CD4-positive, alpha-beta memory T cell (primary cell): ENCODE measurements at regions of chr9 and their contacts with region 1.

Region 1: DNA sequence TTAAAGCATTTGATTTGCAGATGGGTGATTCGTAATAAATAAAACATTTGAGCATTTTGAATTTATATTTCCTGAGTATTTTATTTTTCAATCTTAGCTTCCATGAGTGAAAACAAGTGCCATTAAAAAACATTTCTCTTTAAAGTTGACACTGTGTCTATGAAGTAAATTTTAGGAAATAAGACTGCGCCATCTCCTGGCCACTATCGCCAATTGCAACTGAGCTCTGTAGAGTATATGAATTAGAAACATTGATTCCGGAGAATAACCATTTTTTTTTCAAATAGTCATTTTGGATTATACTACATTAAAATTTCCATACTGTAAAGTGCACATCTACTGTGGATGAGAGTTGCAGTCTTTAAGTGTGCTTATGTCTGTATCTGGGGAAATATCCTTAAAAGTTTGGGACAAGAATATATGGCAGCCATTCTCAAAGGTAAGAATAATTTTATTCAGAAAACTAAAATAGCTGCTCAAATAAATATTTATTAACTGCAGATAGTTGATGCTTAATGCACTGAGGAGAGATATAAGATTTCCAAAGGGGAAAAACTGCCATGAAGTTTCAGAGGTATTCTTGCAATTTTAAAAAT is 5.9 kb downstream of the DMRTA1 start:
- DNase-seq: peak; percentile 29 to 48 (median 35)
- H3K4me3 ChIP-seq: no peak overlapping the region
- H3K4me3 Mint-ChIP-seq: no peak overlapping the region
- H3K27ac ChIP-seq: no peak overlapping the region
- H3K27ac Mint-ChIP-seq: no peak overlapping the region
- H3K4me1 ChIP-seq: peaks cover 3% of the 10 kb centered on the region
- H3K4me1 Mint-ChIP-seq: peaks cover 0 to 7% (median 3%) of the 10 kb centered on the region in 4 donors
- H3K27me3 ChIP-seq: peaks cover 14% of the 10 kb centered on the region
- H3K27me3 Mint-ChIP-seq: peaks cover 23 to 31% of the 10 kb centered on the region in 2 donors

Region 2: DNA sequence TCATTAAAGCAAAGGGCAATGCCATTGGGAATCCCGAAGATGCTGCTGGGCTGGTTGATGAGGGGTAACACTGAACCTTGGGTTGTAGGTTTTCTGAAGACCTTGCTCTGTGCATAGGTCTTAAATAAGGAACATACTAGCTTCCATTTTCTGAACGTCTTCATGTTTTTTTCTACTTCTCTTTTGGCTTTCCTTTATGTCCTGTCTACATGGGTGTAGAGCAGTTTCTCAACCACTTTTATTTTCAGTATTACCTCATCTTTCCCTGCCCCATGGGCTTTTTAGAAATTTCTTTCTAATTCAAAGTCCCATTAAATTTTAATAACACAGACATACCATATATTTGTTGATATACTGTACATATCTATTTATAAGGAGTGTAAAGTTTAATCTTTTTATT is 1212.6 kb before region 1 on chr9 and contains the start of gene IFNA14:
- CTCF ChIA-PET with region 1: no interaction called
- POLR2A ChIA-PET with region 1: no interaction called
- intact Hi-C with region 1: loop called (anchors 5 kb)
- DNase-seq: no peak
- H3K4me3 ChIP-seq: no peak within 1 kb of the TSS
- H3K4me3 Mint-ChIP-seq: no peak within 1 kb of the TSS
- H3K27ac ChIP-seq: no peak within 1 kb of the TSS
- H3K27ac Mint-ChIP-seq: no peak within 1 kb of the TSS
- H3K4me1 ChIP-seq: peaks cover 5% of the 10 kb centered on the region
- H3K4me1 Mint-ChIP-seq: peaks cover 4 to 12% (median 7%) of the 10 kb centered on the region in 4 donors
- H3K27me3 ChIP-seq: no peaks in the 10 kb centered on the region
- H3K27me3 Mint-ChIP-seq: peaks cover 2 to 15% of the 10 kb centered on the region in 2 donors
- total RNA-seq, gene IFNA14: not detected

Region 3: GRCh38 chr9:22037954-22038690 is 414.4 kb before region 1 on chr9:
- CTCF ChIA-PET with region 1: no interaction called
- POLR2A ChIA-PET with region 1: no interaction called
- intact Hi-C with region 1: loop called (anchors 5 kb)
- DNase-seq: peak in 4 of 5 donors; percentile 22 to 39 (median 32)
- H3K4me3 ChIP-seq: no peak overlapping the region
- H3K4me3 Mint-ChIP-seq: no peak overlapping the region
- H3K27ac ChIP-seq: no peak overlapping the region
- H3K27ac Mint-ChIP-seq: no peak overlapping the region
- H3K4me1 ChIP-seq: peaks cover 11% of the 10 kb centered on the region
- H3K4me1 Mint-ChIP-seq: peaks cover 0 to 8% (median 4%) of the 10 kb centered on the region in 4 donors
- H3K27me3 ChIP-seq: no peaks in the 10 kb centered on the region
- H3K27me3 Mint-ChIP-seq: no peaks in the 10 kb centered on the region

Region 4: GRCh38 chr9:22244141-22245011 is 208.1 kb before region 1 on chr9:
- CTCF ChIA-PET with region 1: interaction called, 7 read pairs
- POLR2A ChIA-PET with region 1: no interaction called
- intact Hi-C with region 1: loop called (anchors 1 kb)
- DNase-seq: peak in 4 of 5 donors; percentile 16 to 30 (median 26)
- H3K4me3 ChIP-seq: no peak overlapping the region
- H3K4me3 Mint-ChIP-seq: peak overlapping the region in 3 of 8 donors; percentile 17 to 35 (median 25)
- H3K27ac ChIP-seq: no peak overlapping the region
- H3K27ac Mint-ChIP-seq: no peak overlapping the region
- H3K4me1 ChIP-seq: no peaks in the 10 kb centered on the region
- H3K4me1 Mint-ChIP-seq: peaks cover 2 to 10% (median 6%) of the 10 kb centered on the region in 4 donors
- H3K27me3 ChIP-seq: no peaks in the 10 kb centered on the region
- H3K27me3 Mint-ChIP-seq: peaks cover 1 to 3% of the 10 kb centered on the region in 2 donors

Region 5: GRCh38 chr9:22307013-22307711 is 145.4 kb before region 1 on chr9:
- CTCF ChIA-PET with region 1: no interaction called
- POLR2A ChIA-PET with region 1: no interaction called
- intact Hi-C with region 1: loop called (anchors 2 kb)
- DNase-seq: peak in 2 of 5 donors; percentile 0 to 2
- H3K4me3 ChIP-seq: no peak overlapping the region
- H3K4me3 Mint-ChIP-seq: no peak overlapping the region
- H3K27ac ChIP-seq: no peak overlapping the region
- H3K27ac Mint-ChIP-seq: no peak overlapping the region
- H3K4me1 ChIP-seq: no peaks in the 10 kb centered on the region
- H3K4me1 Mint-ChIP-seq: no peaks in the 10 kb centered on the region
- H3K27me3 ChIP-seq: no peaks in the 10 kb centered on the region
- H3K27me3 Mint-ChIP-seq: peaks cover 4 to 11% of the 10 kb centered on the region in 2 donors

Region 6: DNA sequence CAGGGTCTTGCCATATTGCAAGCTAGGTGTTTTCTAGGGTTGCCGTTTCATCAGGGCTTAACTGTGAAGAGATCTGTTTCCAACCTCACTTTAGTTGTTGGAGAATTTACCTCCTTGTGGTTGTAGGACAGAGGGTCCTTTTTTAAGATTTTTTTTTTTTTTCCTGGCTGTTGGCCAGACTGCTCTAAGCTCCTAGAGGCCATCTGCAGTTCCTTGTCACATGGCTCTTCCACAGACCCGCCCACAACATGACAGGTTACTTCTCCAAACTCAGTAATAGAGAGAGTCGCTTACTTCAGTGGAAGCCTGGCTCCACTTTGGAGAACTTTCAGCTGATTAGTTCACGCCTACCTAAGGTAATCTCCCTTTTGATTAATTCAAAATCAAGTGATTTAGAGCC is 537.8 kb after region 1 on chr9:
- CTCF ChIA-PET with region 1: no interaction called
- POLR2A ChIA-PET with region 1: no interaction called
- intact Hi-C with region 1: no loop called
- DNase-seq: no peak
- H3K4me3 ChIP-seq: no peak overlapping the region
- H3K4me3 Mint-ChIP-seq: no peak overlapping the region
- H3K27ac ChIP-seq: no peak overlapping the region
- H3K27ac Mint-ChIP-seq: no peak overlapping the region
- H3K4me1 ChIP-seq: no peaks in the 10 kb centered on the region
- H3K4me1 Mint-ChIP-seq: no peaks in the 10 kb centered on the region
- H3K27me3 ChIP-seq: no peaks in the 10 kb centered on the region
- H3K27me3 Mint-ChIP-seq: no peaks in the 10 kb centered on the region